Activated naive CD8-positive, alpha-beta T cell treated with anti-CD3 and anti-CD28 coated beads, Interleukin-2, amount 10 ng/mL, durations not matched to agents 7 days and 5 days (primary cell): ENCODE measurements at regions of chr1 and their contacts with region 1.

Region 1: DNA sequence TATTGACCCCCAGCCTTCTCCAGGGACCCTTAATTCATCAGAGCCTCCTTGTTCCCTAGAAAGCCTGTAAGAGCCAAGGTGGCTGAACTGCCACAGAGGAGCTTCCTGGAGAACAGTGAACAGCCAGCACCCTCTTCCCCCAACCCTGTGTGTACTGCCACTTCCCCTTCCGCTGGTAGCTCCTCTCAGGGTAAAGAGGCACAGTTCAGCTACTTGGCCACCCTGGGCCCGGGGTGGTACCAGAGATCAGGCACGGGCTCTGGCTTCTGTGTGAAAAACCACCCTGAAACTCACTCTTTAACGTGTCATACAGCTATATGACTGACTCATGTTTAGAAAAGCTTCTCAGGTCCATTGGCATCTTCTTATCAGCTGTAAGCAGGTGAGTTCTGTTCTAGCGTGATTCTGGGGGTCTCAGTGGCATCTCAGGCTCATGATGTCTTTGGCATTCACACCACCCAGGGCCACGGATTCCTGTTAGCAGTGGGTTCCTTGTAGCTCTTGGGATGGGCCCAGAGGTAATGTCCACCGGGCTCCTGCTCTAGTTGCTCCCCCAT is 22.4 kb downstream of the ARMH1 start:
- DNase-seq: peak; percentile 54
- ATAC-seq: peak; percentile 98
- H3K4me3 Mint-ChIP-seq: peak overlapping the region; percentile 65
- H3K27ac Mint-ChIP-seq: peak overlapping the region; percentile 83
- H3K4me1 Mint-ChIP-seq: peaks cover 25% of the 10 kb centered on the region
- H3K27me3 Mint-ChIP-seq: no peaks in the 10 kb centered on the region

Region 2: GRCh38 chr1:44619261-44619900 is 77.5 kb before region 1 on chr1:
- POLR2A ChIA-PET with region 1: no interaction called
- DNase-seq: no peak
- ATAC-seq: no peak
- H3K4me3 Mint-ChIP-seq: no peak overlapping the region
- H3K27ac Mint-ChIP-seq: no peak overlapping the region
- H3K4me1 Mint-ChIP-seq: no peaks in the 10 kb centered on the region
- H3K27me3 Mint-ChIP-seq: no peaks in the 10 kb centered on the region

Region 3: DNA sequence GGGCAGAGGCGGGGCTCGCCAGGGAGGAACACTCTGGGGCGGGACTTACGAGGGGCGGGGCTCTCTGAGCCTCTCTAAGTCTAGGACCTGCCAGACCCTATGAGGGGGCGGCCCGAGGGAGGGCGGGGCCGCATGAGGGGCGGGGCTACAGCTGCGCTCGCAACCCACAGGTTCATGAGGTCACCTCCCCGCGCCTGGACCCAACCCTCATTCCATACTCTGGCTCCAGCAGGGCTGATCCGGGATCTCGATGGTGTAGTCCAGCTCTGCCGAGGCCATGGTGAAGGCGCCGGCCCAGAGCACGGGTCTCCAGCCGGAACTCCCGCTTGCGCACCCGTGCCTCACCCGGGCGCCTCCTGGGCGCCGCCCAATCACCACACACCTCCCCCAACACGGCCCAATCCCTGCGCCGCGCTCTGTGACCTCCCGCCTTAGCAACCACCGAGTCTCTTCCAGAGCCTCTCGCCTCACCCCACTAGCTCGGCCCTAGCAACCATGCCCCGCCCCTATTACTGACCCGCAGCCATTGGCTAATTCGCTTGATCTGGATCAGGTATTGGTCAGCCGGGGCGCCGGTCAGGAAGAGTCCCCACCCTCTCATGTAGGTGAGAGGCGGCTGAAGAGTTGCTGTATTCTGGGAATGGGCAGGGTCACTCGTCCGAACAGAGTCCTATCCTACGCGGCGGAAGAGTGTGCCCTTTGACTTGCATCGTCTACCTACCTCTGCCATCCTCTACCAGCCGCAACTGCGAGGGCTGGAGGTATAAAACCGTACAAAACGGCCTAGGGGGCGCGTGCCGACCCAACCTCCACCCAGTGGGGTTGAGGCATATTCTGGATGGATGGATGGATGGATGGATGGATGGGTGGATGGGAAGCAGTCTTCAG is 22.5 kb before region 1 on chr1 and contains the starts of genes ARMH1 and TMEM53:
- POLR2A ChIA-PET with region 1: interaction called, 19 read pairs
- DNase-seq: peak; percentile 98
- ATAC-seq: peak; percentile 96
- H3K4me3 Mint-ChIP-seq: peak within 1 kb of the TSS; percentile 89
- H3K27ac Mint-ChIP-seq: peak within 1 kb of the TSS; percentile 82
- H3K4me1 Mint-ChIP-seq: peaks cover 18% of the 10 kb centered on the region
- H3K27me3 Mint-ChIP-seq: no peaks in the 10 kb centered on the region
- total RNA-seq, gene ARMH1: 95.7 to 105 TPM
- total RNA-seq, gene TMEM53: 4.2 to 4.7 TPM